CD14-positive monocyte (primary cell): ENCODE measurements at regions of chr16 and their contacts with region 1.

Region 1: GRCh38 chr16:16175296-16175695 is 48.0 kb downstream of the ABCC6 start:
- DNase-seq: no peak
- H3K4me3 ChIP-seq: no peak overlapping the region
- H3K4me3 Mint-ChIP-seq: no peak overlapping the region
- H3K27ac ChIP-seq: no peak overlapping the region
- H3K27ac Mint-ChIP-seq: no peak overlapping the region
- H3K4me1 ChIP-seq: no peaks in the 10 kb centered on the region
- H3K4me1 Mint-ChIP-seq: no peaks in the 10 kb centered on the region
- H3K27me3 ChIP-seq: no peaks in the 10 kb centered on the region
- H3K27me3 Mint-ChIP-seq: peaks cover 0 to 2% (median 0%) of the 10 kb centered on the region in 3 donors
- CTCF ChIP-seq: no peak

Region 2: GRCh38 chr16:16109453-16110108 is 65.7 kb before region 1 on chr16:
- intact Hi-C with region 1: loop called in 1 of 2 experiments (anchors 10 kb)
- DNase-seq: no peak
- H3K4me3 ChIP-seq: no peak overlapping the region
- H3K4me3 Mint-ChIP-seq: no peak overlapping the region
- H3K27ac ChIP-seq: no peak overlapping the region
- H3K27ac Mint-ChIP-seq: peak overlapping the region in 3 of 7 donors; percentile 10 to 72 (median 17)
- H3K4me1 ChIP-seq: no peaks in the 10 kb centered on the region
- H3K4me1 Mint-ChIP-seq: no peaks in the 10 kb centered on the region
- H3K27me3 ChIP-seq: no peaks in the 10 kb centered on the region
- H3K27me3 Mint-ChIP-seq: no peaks in the 10 kb centered on the region
- CTCF ChIP-seq: no peak